ENCODE measurements at regions of chr19 and their contacts with region 1.

Region 1: DNA sequence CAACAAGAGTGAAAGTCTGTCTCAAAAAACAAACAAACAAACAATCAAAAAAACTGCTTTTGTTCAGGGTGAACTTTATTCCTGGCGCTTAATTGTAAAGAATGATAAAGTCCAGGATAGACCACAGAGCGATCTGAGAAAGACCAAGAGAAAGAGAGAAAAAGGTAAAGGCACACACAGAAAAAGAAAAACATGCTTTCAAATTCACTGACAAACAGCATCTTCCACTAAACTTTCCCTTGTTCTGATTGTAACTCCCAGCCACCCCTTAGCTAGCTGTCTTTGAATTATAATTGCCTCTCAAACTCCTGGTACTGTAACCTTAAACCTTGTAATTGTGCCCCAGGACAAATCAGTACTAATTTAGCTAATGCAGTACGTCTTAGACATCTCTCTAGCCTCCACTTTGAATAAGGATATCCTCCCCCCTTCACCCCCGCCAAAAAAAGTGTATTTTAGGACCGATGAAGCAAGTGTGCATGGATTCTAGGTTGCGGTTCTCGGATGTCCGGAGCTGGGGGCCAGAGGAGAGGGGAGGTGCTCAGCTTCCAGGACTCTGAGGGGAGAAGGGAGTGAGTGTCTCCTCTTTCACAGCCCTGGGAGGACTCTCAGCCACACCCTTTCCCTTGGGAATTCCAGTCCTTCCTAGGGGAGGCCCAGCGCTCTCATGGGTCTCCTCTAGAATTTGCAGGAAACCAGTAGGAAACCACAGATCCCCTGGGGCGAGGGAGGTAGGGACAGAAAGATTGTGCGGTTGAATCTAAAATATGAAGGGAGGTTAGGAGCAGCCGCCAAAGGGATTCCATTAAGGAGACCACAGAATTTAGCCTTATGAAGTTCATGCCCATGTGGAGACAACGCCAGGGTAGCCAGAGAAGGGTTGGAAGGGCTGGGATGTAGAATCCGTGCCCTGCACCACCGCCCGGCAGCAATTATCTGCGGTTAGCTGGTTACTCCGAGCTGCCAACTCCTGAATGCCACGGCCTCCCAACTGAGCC is 19.7 kb downstream of the ZNF536 start:
- DNase-seq: no peak
- ATAC-seq: no peak
- H3K4me3 Mint-ChIP-seq: no peak overlapping the region
- H3K27ac Mint-ChIP-seq: no peak overlapping the region
- H3K4me1 Mint-ChIP-seq: no peaks in the 10 kb centered on the region
- H3K27me3 Mint-ChIP-seq: peaks cover 9% of the 10 kb centered on the region

Region 2: GRCh38 chr19:29367791-29368222 is 1024.0 kb before region 1 on chr19:
- CTCF ChIA-PET with region 1: no interaction called
- POLR2A ChIA-PET with region 1: no interaction called
- intact Hi-C with region 1: loop called in 1 of 2 experiments (anchors 10 kb)
- DNase-seq: no peak
- ATAC-seq: no peak
- H3K4me3 Mint-ChIP-seq: no peak overlapping the region
- H3K27ac Mint-ChIP-seq: no peak overlapping the region
- H3K4me1 Mint-ChIP-seq: no peaks in the 10 kb centered on the region
- H3K27me3 Mint-ChIP-seq: peaks cover 33% of the 10 kb centered on the region

Region 3: GRCh38 chr19:30419568-30420180 is 27.8 kb after region 1 on chr19:
- CTCF ChIA-PET with region 1: no interaction called
- POLR2A ChIA-PET with region 1: no interaction called
- intact Hi-C with region 1: no loop called
- DNase-seq: no peak
- ATAC-seq: no peak
- H3K4me3 Mint-ChIP-seq: no peak overlapping the region
- H3K27ac Mint-ChIP-seq: no peak overlapping the region
- H3K4me1 Mint-ChIP-seq: no peaks in the 10 kb centered on the region
- H3K27me3 Mint-ChIP-seq: peaks cover 20% of the 10 kb centered on the region

Measured in activated CD4-positive, alpha-beta T cell treated with anti-CD3 and anti-CD28 coated beads for 36 hours (primary cell).